ENCODE measurements at regions of chr11 and their contacts with region 1.

Region 1: DNA sequence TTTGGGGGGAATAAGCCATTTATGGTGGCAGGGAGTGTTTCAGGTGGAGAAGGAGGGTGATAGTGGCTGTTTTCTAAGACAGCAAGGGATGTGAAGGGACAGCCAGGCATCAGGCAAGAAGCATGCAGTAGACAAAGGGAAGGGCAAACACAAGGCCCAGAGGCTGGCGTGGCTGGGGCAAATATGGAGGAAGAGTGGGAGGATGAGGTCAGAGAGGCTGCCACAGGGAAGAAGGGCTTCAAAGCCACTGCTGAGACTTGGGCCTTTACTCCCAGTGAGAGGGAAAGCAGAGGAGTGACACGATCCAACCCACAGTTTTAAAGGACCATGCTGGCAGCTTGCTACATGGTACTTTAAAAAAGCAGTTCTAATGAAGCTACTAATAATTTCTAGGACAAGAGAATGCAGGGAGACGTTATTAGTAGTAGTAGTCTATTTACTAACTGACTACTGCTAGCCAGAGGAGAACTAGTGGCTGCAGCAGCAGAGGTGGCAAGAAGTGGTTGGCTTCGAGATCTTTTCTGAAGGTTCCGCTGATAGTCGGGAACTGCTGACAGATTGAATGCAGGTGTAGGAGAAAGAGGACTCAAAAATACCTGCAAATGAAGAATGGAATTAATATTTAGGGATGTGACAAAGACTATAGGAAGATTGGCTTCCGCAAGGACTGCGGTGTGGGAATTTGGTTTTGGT is 13.7 kb downstream of the KMT5B start:
- DNase-seq: no peak
- H3K4me3 Mint-ChIP-seq: no peak overlapping the region
- H3K27ac Mint-ChIP-seq: peak overlapping the region; percentile 26
- H3K4me1 Mint-ChIP-seq: peaks cover 30% of the 10 kb centered on the region
- H3K27me3 Mint-ChIP-seq: no peaks in the 10 kb centered on the region
- CTCF ChIP-seq: no peak

Region 2: DNA sequence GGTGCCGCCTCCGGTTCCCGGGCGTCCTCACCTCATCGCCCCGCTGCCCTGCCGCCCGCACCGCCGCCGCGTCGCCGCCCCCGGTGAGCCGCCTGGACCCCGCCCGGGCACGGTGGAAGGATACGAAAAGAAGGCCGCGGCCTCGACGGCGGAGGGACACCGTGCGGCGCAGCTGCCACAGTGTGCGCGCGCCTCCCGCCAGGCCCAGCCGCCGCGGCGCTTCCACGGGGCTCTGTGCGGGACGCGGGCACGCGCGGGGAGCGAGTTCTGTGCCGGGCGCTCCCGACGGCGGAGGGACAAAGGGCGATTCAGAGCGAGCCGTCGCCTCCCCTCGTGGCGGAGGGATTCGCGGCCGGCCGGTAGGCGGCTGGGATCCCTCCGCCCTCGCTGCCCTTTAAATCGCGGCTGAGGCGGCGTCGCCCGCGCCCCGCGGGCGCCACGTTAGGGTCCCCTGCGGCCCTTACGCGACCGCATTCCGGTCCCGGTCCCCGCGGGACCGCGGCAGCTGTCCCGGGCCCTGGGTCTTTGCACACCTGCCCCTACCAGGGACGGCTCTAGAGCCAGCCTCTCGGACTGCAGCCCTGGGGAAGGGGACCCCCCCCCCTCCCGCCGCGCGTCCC is 14.2 kb after region 1 on chr11:
- CTCF ChIA-PET with region 1: interaction called, 15 read pairs
- POLR2A ChIA-PET with region 1: interaction called, 8 read pairs
- intact Hi-C with region 1: no loop called
- DNase-seq: peak; percentile 81
- H3K4me3 Mint-ChIP-seq: peak overlapping the region; percentile 91
- H3K27ac Mint-ChIP-seq: peak overlapping the region; percentile 84
- H3K4me1 Mint-ChIP-seq: peaks cover 36% of the 10 kb centered on the region
- H3K27me3 Mint-ChIP-seq: peaks cover 11% of the 10 kb centered on the region
- CTCF ChIP-seq: no peak

Region 3: DNA sequence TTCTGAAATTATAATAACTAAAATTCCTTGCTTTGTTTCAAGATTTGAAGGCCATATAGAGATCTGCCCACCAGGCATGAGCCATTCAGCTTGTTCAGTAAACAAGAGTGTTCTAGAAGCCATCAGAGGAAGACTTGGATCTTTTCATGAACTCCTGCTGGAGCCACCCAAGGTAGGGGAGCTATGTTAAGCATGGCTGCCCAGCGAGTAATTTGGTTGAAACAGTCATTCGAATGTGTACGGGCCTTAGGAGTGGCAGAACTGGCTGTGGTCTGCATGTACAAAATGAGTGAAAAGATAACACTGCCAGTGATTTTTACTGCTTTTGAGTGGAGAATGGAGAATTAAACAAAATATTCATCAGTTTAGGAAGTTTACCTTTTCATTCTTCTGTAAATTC is 364.8 kb after region 1 on chr11:
- CTCF ChIA-PET with region 1: no interaction called
- POLR2A ChIA-PET with region 1: no interaction called
- intact Hi-C with region 1: no loop called
- DNase-seq: no peak
- H3K4me3 Mint-ChIP-seq: no peak overlapping the region
- H3K27ac Mint-ChIP-seq: no peak overlapping the region
- H3K4me1 Mint-ChIP-seq: no peaks in the 10 kb centered on the region
- H3K27me3 Mint-ChIP-seq: no peaks in the 10 kb centered on the region
- CTCF ChIP-seq: no peak

Region 4: GRCh38 chr11:68942751-68943271 is 743.4 kb after region 1 on chr11:
- CTCF ChIA-PET with region 1: no interaction called
- POLR2A ChIA-PET with region 1: no interaction called
- intact Hi-C with region 1: no loop called
- DNase-seq: no peak
- H3K4me3 Mint-ChIP-seq: no peak overlapping the region
- H3K27ac Mint-ChIP-seq: no peak overlapping the region
- H3K4me1 Mint-ChIP-seq: no peaks in the 10 kb centered on the region
- H3K27me3 Mint-ChIP-seq: peaks cover 5% of the 10 kb centered on the region
- CTCF ChIP-seq: no peak

Measured in MCF 10A (cell line).